T-cell (primary cell): ENCODE measurements at regions of chrX and their contacts with region 1.

Region 1: DNA sequence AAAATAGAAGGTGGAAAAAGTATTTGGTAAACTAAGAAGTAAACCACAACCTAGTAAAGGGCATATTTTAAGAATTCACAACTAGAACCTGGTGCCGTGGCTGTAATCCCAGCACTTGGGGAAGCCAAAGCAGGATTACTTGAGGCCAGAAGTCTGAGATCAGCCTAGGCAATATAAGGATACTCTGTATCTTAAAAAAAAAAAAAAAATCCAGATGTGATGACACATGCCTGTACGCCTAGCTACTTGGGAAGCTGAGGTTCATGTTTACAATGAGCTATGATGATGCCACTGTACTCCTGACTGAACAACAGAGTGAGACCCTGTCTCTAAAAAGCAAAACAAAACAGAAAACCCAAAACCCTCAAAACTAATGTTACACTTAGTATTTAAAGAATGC is 294.9 kb upstream of the ZCCHC13 start:
- DNase-seq: no peak
- ATAC-seq: no peak
- H3K4me3 ChIP-seq: no peak overlapping the region
- H3K4me3 Mint-ChIP-seq: no peak overlapping the region
- H3K27ac ChIP-seq: no peak overlapping the region
- H3K27ac Mint-ChIP-seq: no peak overlapping the region
- H3K4me1 ChIP-seq: no peaks in the 10 kb centered on the region
- H3K4me1 Mint-ChIP-seq: peaks cover 2 to 3% (median 3%) of the 10 kb centered on the region in 3 donors
- H3K27me3 ChIP-seq: no peaks in the 10 kb centered on the region
- H3K27me3 Mint-ChIP-seq: no peaks in the 10 kb centered on the region

Region 2: GRCh38 chrX:74286950-74287740 is 278.1 kb after region 1 on chrX:
- CTCF ChIA-PET with region 1: no interaction called
- POLR2A ChIA-PET with region 1: interaction called in 1 of 2 experiments, 18 read pairs
- DNase-seq: no peak
- ATAC-seq: no peak
- H3K4me3 ChIP-seq: no peak overlapping the region
- H3K4me3 Mint-ChIP-seq: no peak overlapping the region
- H3K27ac ChIP-seq: no peak overlapping the region
- H3K27ac Mint-ChIP-seq: peak overlapping the region in 1 of 2 donors; percentile 28
- H3K4me1 ChIP-seq: peaks cover 0 to 14% of the 10 kb centered on the region in 2 experiments
- H3K4me1 Mint-ChIP-seq: peaks cover 34 to 46% (median 44%) of the 10 kb centered on the region in 3 donors
- H3K27me3 ChIP-seq: no peaks in the 10 kb centered on the region
- H3K27me3 Mint-ChIP-seq: peaks cover 0 to 6% of the 10 kb centered on the region in 2 donors